A673 (cell line): ENCODE measurements at regions of chr11 and their contacts with region 1.

Region 1: GRCh38 chr11:125164422-125165110 is at the start of gene PKNOX2:
- DNase-seq: peak; percentile 85
- H3K4me3 ChIP-seq: peak within 1 kb of the TSS; percentile 55
- H3K27ac ChIP-seq: no peak within 1 kb of the TSS
- H3K4me1 ChIP-seq: no peaks in the 10 kb centered on the region
- H3K27me3 ChIP-seq: peaks cover 14% of the 10 kb centered on the region
- CTCF ChIP-seq: peak; percentile 71
- total RNA-seq, gene PKNOX2: 1.1 and 1.4 TPM in 2 replicates

Region 2: DNA sequence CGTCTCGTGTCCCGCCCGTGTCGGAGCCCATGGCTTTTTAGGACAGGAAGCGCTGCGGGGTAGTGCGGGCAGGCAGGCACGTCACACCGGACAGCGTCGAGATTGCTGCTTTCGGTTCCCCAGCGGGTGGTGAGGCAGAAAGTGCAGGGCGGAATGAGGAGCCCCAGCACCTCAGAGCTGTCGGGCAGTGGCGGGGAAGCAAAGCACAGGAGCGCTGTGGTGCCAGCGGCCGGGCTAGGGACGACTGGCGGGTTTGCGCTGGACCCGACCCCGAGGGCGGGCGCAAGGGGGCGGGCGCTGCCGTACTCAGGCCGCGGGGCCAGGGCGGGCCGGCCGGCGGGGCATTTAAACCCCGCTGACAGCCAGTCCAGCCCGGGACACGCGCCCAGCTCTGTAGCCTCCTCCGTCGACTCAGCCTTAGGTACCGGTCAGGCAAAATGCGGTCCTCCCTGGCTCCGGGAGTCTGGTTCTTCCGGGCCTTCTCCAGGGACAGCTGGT is 101.6 kb before region 1 on chr11 and contains the start of gene SLC37A2:
- CTCF ChIA-PET with region 1: no interaction called
- POLR2A ChIA-PET with region 1: no interaction called
- intact Hi-C with region 1: no loop called
- DNase-seq: peak; percentile 48
- H3K4me3 ChIP-seq: peak within 1 kb of the TSS; percentile 38
- H3K27ac ChIP-seq: no peak within 1 kb of the TSS
- H3K4me1 ChIP-seq: no peaks in the 10 kb centered on the region
- H3K27me3 ChIP-seq: peaks cover 64% of the 10 kb centered on the region
- CTCF ChIP-seq: no peak
- total RNA-seq, gene SLC37A2: 0.26 TPM in 1 of 2 replicates, not detected in the other

Region 3: DNA sequence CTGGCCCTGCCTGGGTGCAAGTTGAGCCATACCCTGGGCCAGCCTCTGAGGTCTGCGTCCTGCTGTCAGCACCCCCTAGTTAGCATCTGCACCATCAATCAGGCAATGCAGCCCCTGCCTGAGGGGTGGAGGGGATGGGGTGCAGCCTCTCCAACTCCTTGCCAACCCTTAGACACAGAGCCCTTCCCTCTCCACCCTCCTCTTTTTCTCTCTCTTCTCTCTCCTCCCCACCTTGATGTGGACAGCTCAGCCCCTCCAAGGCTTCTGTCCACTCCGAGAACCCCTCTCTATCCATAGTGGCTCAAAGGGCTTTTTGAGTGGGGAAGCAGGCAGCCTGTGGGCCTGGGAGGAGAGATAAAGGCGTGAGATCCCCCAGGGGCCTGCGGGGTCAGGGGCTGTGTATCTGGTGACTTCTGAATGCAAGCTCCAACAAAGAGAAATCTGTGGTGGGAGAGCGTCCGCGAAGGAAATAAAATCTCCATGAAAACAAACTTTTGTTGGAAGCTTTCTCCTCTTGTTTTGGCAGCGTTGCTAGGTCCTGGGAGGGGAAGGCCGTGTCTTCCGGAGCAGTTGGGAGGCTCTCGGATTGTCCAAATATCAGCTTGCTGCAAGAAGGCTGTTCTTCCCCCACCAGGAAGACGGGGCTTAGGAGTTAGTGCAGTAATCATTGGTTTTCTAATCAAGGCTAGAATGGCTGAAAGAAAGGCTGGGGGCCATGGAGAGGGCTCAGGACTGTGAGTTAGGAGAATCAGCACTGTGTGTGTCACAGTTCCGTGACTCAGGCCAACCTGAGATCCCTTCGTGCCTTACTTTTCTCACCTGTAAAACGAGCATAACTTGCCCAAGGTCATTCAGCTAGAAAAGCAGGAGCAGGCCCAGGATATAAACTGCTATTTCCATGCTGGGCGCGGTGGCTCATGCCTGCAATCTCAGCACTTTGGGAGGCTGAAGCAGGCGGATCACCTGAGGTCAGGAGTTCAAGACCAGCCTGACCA is 50.3 kb after region 1 on chr11:
- CTCF ChIA-PET with region 1: no interaction called
- POLR2A ChIA-PET with region 1: no interaction called
- intact Hi-C with region 1: no loop called
- DNase-seq: no peak
- H3K4me3 ChIP-seq: no peak overlapping the region
- H3K27ac ChIP-seq: no peak overlapping the region
- H3K4me1 ChIP-seq: no peaks in the 10 kb centered on the region
- H3K27me3 ChIP-seq: peaks cover under 1% of the 10 kb centered on the region
- CTCF ChIP-seq: no peak

Region 4: DNA sequence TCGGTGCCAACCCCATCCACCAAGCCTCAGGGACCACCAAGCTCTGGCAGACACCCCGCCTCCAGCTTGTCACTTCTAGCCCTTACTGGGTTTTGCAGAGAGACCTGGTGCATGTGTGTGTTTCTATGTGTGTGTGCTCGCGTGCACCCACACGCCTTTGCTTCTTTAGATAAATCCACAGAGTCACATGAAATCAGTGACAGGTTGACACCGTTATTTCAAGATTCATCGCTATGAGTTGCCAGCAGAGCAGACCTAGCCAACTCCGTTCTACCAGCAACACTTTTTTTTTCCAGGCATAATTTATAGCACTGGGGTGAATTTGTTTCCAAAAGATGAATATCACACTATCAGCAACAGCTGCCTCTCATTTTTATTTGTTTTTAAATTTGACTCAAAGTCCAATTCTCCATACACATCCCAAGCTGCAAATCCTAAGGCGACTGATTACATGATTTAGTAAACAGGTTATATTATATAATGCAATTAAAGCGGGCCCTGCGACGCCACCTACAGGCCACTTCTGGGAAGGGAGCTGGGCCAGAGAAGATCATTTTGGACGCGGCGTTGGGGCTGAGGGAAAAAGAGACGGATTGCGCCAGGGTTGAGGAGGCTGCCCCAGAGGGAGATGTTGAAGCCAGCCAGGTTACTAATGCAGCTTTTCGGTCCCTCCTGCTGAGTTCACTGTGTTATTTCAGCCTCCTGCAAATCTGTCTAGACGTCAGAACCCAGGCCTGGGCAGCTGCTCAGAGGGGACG is 181.0 kb after region 1 on chr11:
- CTCF ChIA-PET with region 1: interaction called, 14 read pairs
- POLR2A ChIA-PET with region 1: interaction called, 5 read pairs
- intact Hi-C with region 1: loop called (anchors 5 kb)
- DNase-seq: peak; percentile 68
- H3K4me3 ChIP-seq: no peak overlapping the region
- H3K27ac ChIP-seq: no peak overlapping the region
- H3K4me1 ChIP-seq: no peaks in the 10 kb centered on the region
- H3K27me3 ChIP-seq: no peaks in the 10 kb centered on the region
- CTCF ChIP-seq: peak; percentile 98

Region 5: GRCh38 chr11:125358254-125358840 is 193.8 kb after region 1 on chr11:
- CTCF ChIA-PET with region 1: interaction called, 13 read pairs
- POLR2A ChIA-PET with region 1: no interaction called
- intact Hi-C with region 1: no loop called
- DNase-seq: no peak
- H3K4me3 ChIP-seq: no peak overlapping the region
- H3K27ac ChIP-seq: no peak overlapping the region
- H3K4me1 ChIP-seq: no peaks in the 10 kb centered on the region
- H3K27me3 ChIP-seq: no peaks in the 10 kb centered on the region
- CTCF ChIP-seq: no peak

Region 6: DNA sequence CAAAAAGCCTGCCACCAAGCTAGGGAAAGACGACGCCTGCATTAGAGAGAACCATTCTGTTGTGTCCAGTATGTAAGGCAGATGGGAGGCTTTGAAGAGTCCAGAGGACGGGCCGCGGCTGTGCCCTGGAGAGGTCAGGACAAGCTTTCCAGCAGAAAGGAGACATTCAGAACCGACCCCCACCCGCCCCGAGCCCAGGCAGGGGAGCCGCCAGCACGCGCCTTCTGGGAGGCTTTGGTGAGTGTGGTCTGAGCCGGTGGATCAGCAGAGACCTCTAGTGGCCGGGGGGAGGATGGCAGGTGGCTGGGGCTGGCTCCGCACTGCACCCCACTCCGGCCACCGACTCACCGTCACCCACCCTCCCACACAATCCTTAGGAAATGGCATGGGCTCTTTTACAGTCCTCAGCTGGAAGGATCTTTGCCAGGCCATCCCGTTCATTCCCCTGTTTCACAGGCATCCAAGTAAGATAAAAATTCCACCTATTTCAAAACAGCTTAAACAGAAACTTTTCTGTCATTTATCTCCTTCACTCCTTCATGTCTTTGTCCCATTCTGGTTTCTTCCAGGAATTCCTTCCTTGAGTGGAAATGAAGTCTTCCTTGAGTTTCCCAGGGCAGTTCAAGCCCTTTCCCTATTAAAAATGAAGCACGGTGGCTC is 240.3 kb after region 1 on chr11:
- CTCF ChIA-PET with region 1: no interaction called
- POLR2A ChIA-PET with region 1: no interaction called
- intact Hi-C with region 1: loop called (anchors 2 kb)
- DNase-seq: peak; percentile 67
- H3K4me3 ChIP-seq: no peak overlapping the region
- H3K27ac ChIP-seq: no peak overlapping the region
- H3K4me1 ChIP-seq: no peaks in the 10 kb centered on the region
- H3K27me3 ChIP-seq: peaks cover 23% of the 10 kb centered on the region
- CTCF ChIP-seq: peak; percentile 96